ENCODE measurements at regions of chr2 and their contacts with region 1.

Region 1: DNA sequence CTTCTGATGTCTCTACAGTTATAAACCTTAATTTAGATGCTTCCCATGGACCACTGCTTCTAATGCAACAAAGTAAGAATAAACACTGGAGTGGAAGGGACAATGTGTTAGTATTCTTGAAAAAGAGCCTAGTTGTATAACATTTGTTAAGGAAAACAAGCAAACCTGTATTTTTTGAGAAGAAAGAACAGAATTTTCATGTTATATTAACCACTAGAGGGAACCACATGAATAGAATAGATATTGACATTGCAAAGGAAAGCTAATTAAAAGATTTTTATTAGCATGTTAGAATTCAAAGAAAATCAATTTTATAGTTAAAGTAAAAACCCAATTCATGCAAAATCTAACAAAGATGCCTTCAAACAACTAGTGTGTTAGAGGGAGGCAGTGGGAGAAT is 151.2 kb upstream of the BARD1 start:
- DNase-seq: no peak
- H3K4me3 Mint-ChIP-seq: no peak overlapping the region
- H3K27ac Mint-ChIP-seq: no peak overlapping the region
- H3K4me1 Mint-ChIP-seq: no peaks in the 10 kb centered on the region
- H3K27me3 Mint-ChIP-seq: no peaks in the 10 kb centered on the region
- CTCF ChIP-seq: peak; percentile 37

Region 2: DNA sequence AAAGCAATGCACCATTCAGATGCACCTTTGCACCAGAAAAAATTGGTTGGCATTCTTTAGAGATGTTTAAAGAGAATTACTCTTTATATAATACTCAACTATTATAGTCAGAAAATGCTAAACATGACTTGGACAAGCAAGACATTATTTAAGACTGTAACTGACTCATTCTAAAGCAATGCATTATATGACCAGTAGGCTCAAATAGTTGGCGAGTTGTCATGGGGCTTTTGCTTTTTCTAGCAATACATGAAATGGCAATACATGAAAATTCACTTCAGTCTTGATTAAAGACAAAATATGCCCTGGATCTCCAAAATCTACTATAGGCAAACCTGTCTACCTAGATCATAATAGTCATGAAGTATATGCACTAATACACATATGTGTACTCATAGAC is 766.7 kb before region 1 on chr2:
- CTCF ChIA-PET with region 1: no interaction called
- intact Hi-C with region 1: no loop called
- DNase-seq: no peak
- H3K4me3 Mint-ChIP-seq: no peak overlapping the region
- H3K27ac Mint-ChIP-seq: no peak overlapping the region
- H3K4me1 Mint-ChIP-seq: no peaks in the 10 kb centered on the region
- H3K27me3 Mint-ChIP-seq: no peaks in the 10 kb centered on the region
- CTCF ChIP-seq: no peak

Region 3: GRCh38 chr2:214378277-214379116 is 582.2 kb before region 1 on chr2:
- CTCF ChIA-PET with region 1: no interaction called
- intact Hi-C with region 1: no loop called
- DNase-seq: peak; percentile 22
- H3K4me3 Mint-ChIP-seq: no peak overlapping the region
- H3K27ac Mint-ChIP-seq: no peak overlapping the region
- H3K4me1 Mint-ChIP-seq: no peaks in the 10 kb centered on the region
- H3K27me3 Mint-ChIP-seq: no peaks in the 10 kb centered on the region
- CTCF ChIP-seq: peak; percentile 18

Region 4: GRCh38 chr2:214856137-214856536 is 104.5 kb before region 1 on chr2:
- CTCF ChIA-PET with region 1: no interaction called
- intact Hi-C with region 1: no loop called
- DNase-seq: no peak
- H3K4me3 Mint-ChIP-seq: no peak overlapping the region
- H3K27ac Mint-ChIP-seq: no peak overlapping the region
- H3K4me1 Mint-ChIP-seq: no peaks in the 10 kb centered on the region
- H3K27me3 Mint-ChIP-seq: no peaks in the 10 kb centered on the region
- CTCF ChIP-seq: no peak

Region 5: GRCh38 chr2:214876815-214877214 is 83.9 kb before region 1 on chr2:
- CTCF ChIA-PET with region 1: no interaction called
- intact Hi-C with region 1: no loop called
- DNase-seq: no peak
- H3K4me3 Mint-ChIP-seq: no peak overlapping the region
- H3K27ac Mint-ChIP-seq: no peak overlapping the region
- H3K4me1 Mint-ChIP-seq: no peaks in the 10 kb centered on the region
- H3K27me3 Mint-ChIP-seq: no peaks in the 10 kb centered on the region
- CTCF ChIP-seq: no peak

Region 6: DNA sequence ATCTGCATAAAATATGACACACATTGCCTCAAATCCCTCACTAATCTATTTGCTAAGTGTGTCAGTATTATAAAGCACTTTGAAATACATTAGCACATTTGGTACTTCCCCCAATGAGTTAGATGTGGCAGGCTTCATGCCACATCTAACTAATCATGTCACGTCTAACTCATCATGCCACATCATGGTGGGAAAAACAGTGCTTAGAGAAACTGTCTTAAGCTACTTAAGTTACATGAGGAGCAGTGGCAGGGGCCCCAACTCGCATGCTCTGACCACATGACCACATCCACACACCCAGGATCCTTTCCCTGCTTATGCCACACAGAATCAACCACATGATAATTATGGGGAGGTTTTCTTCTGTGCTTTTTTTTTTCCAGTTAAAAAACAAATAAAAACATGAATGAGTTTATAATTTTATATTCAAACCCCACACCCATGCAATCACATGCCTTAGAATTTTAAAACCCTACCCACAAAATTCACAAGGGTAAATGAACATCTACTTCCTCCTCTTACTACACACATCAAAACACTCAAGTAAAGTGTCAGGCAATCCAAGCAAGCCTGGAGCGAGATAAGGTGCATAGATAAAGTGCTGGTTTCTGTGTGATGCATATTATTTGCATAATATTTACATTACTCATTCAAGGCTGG is 176.1 kb after region 1 on chr2:
- CTCF ChIA-PET with region 1: no interaction called
- intact Hi-C with region 1: loop called (anchors 5 kb)
- DNase-seq: no peak
- H3K4me3 Mint-ChIP-seq: peak overlapping the region; percentile 73
- H3K27ac Mint-ChIP-seq: peak overlapping the region; percentile 94
- H3K4me1 Mint-ChIP-seq: peaks cover 42% of the 10 kb centered on the region
- H3K27me3 Mint-ChIP-seq: no peaks in the 10 kb centered on the region
- CTCF ChIP-seq: no peak

Region 7: DNA sequence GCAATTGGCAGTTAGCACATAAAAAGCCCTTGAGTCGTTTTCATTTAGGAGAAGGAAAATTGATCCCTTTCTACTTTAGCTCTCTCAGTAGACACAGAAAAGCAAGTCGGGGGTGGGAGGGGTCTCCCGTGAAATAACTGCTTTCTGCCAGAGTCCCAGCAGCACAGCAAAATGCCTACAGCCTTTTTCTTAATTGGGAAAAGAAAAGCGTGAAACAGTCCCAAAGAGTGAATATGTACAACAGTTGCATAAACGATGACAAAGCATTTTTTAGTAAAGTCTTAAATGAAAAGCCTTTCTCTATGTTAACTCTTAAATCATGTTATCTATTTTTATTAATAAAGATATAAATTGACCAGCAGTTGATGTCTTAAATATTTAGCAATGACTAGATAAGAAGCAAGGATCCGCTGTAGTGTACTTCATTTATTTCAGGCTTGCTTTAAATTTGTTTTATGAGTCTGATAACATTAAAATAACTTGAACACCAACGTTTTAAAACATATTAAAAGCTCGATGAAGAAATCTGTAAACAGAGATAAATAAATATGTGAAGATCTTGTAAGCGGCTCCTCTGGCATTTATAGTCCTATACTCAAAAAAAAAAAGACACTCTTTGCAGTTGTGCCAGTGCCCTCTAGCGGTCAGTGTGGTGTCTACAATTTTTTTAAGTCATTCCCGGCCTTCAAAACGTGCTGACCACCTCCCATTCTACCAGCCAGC is 308.9 kb after region 1 on chr2:
- CTCF ChIA-PET with region 1: interaction called, 4 read pairs
- intact Hi-C with region 1: loop called (anchors 2 kb)
- DNase-seq: peak; percentile 65
- H3K4me3 Mint-ChIP-seq: no peak overlapping the region
- H3K27ac Mint-ChIP-seq: no peak overlapping the region
- H3K4me1 Mint-ChIP-seq: no peaks in the 10 kb centered on the region
- H3K27me3 Mint-ChIP-seq: no peaks in the 10 kb centered on the region
- CTCF ChIP-seq: peak; percentile 51

Region 8: DNA sequence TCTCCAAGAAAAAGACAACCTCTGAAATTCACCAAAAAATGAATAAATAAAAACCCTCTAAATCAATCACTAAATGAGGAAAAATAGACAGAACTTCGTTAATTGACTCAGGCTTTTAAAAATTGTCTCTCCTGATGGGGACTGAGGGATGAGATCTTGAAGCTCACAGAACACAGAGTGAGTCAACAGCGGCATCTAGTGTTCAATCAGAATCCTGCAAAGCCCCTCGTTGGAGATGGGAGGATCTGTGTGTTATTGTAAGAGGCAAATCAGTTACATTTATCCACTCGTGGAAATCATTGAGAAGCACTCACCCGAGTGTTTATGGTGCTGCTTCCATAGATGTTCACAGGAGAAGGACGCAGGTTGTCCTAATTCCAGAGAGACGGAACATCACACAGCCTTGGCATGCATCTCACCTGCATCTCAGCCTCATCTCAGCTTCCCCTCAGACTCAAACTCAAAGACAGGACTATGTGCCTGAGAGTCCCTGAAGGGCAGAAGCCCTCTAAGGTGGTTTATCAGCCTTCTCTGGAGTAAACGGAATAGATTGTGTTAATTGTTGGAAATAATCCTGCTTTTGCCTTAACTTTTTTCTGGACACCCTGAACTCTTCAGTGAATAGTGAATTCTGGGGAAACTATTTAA is 970.7 kb after region 1 on chr2:
- CTCF ChIA-PET with region 1: interaction called, 6 read pairs
- intact Hi-C with region 1: loop called (anchors 5 kb)
- DNase-seq: peak; percentile 58
- H3K4me3 Mint-ChIP-seq: peak overlapping the region; percentile 11
- H3K27ac Mint-ChIP-seq: no peak overlapping the region
- H3K4me1 Mint-ChIP-seq: peaks cover 17% of the 10 kb centered on the region
- H3K27me3 Mint-ChIP-seq: no peaks in the 10 kb centered on the region
- CTCF ChIP-seq: peak; percentile 76